ENCODE measurements at regions of chr7 and their contacts with region 1.

Region 1: GRCh38 chr7:94436018-94436604 is 41.4 kb downstream of the COL1A2 start:
- DNase-seq: peak; percentile 37 to 48
- H3K4me3 ChIP-seq: no peak overlapping the region
- H3K27ac ChIP-seq: no peak overlapping the region
- H3K4me1 ChIP-seq: no peaks in the 10 kb centered on the region
- H3K27me3 ChIP-seq: no peaks in the 10 kb centered on the region
- CTCF ChIP-seq: peak; percentile 88

Region 2: DNA sequence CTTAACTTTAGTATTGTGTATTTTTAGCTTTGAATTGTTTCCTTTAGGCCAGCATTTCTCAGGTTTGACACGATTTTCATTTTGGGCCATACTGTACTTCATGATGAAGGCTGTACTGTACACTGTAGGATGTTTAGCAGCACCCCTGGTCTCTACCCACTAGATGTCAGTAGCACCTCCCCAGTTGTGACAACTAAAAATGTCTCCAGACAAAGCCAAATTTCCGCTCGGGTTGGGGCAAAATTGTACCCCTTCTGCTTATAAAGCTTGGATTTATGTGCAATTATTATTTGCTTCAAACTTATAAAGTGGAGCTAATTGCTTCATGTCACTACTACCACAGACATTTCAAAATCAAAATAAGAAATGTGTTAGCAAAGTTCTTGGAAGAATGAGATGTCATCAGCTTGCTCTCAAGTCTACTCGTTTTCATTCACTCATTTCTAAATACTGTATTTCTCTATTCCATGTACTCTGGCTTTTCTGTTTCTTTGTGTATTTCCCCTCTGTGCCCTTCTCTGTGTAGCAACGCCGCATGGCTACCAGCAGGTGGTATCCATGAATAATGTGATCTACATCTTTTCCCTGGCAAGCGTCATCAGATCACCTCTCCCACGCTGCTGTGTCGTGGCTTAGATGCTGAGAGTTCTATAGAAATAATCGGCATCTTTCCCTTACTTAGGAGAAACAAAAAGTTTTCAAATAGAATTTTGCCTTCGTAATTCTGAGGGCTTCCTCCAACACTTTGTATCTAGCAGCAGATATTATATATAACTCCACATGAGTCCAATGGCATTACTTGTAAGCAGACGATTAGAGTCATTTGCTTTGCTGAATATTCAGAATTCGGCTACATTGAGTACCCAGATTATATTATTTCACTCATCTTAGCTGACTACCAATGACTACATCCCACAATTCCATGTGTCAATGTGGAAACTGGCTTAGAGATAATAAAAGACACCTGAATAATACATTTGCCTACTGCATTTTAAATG is 813.8 kb before region 1 on chr7:
- CTCF ChIA-PET with region 1: no interaction called
- POLR2A ChIA-PET with region 1: no interaction called
- intact Hi-C with region 1: loop called (anchors 1 kb)
- DNase-seq: peak in 1 of 2 experiments; percentile 10
- H3K4me3 ChIP-seq: peak overlapping the region; percentile 19; the same call in 1 of the 2 replicates
- H3K27ac ChIP-seq: no peak overlapping the region
- H3K4me1 ChIP-seq: no peaks in the 10 kb centered on the region
- H3K27me3 ChIP-seq: no peaks in the 10 kb centered on the region
- CTCF ChIP-seq: peak; percentile 62; the same call in 1 of the 2 replicates

Region 3: GRCh38 chr7:93715234-93715633 is 720.9 kb before region 1 on chr7:
- CTCF ChIA-PET with region 1: no interaction called
- POLR2A ChIA-PET with region 1: no interaction called
- intact Hi-C with region 1: loop called (anchors 10 kb)
- DNase-seq: peak in 1 of 2 experiments; percentile 37
- H3K4me3 ChIP-seq: no peak overlapping the region
- H3K27ac ChIP-seq: no peak overlapping the region
- H3K4me1 ChIP-seq: no peaks in the 10 kb centered on the region
- H3K27me3 ChIP-seq: no peaks in the 10 kb centered on the region
- CTCF ChIP-seq: peak; percentile 53

Region 4: DNA sequence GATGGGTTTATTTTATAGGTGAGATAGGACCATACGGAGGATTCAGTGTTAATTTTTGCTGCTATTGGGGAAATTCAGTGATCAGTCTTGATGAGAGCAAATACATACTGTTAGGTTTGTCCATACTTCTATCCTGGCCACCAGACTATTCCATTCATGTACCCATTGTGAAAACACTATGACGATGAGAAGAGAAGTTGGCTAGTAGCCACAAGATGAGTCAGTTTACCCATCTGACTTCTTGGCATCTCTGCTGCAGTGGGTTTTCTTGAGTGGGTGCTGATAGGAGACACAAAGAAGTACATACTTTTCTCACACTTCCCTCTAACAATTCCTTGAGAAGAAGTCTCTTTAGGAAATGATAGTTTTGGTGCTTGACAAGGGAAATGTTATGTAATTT is 678.7 kb before region 1 on chr7:
- CTCF ChIA-PET with region 1: no interaction called
- POLR2A ChIA-PET with region 1: no interaction called
- intact Hi-C with region 1: no loop called
- DNase-seq: no peak
- H3K4me3 ChIP-seq: no peak overlapping the region
- H3K27ac ChIP-seq: no peak overlapping the region
- H3K4me1 ChIP-seq: no peaks in the 10 kb centered on the region
- H3K27me3 ChIP-seq: no peaks in the 10 kb centered on the region
- CTCF ChIP-seq: no peak

Region 5: GRCh38 chr7:94679358-94679757 is 243.2 kb after region 1 on chr7:
- CTCF ChIA-PET with region 1: no interaction called
- POLR2A ChIA-PET with region 1: no interaction called
- intact Hi-C with region 1: no loop called
- DNase-seq: no peak
- H3K4me3 ChIP-seq: no peak overlapping the region
- H3K27ac ChIP-seq: no peak overlapping the region
- H3K4me1 ChIP-seq: peaks cover 6% of the 10 kb centered on the region; the same call in 1 of the 2 replicates
- H3K27me3 ChIP-seq: no peaks in the 10 kb centered on the region
- CTCF ChIP-seq: no peak

Measured in PC-9 (cell line).